GM10248 (cell line): ENCODE measurements at regions of chr1 and their contacts with region 1.

Region 1: DNA sequence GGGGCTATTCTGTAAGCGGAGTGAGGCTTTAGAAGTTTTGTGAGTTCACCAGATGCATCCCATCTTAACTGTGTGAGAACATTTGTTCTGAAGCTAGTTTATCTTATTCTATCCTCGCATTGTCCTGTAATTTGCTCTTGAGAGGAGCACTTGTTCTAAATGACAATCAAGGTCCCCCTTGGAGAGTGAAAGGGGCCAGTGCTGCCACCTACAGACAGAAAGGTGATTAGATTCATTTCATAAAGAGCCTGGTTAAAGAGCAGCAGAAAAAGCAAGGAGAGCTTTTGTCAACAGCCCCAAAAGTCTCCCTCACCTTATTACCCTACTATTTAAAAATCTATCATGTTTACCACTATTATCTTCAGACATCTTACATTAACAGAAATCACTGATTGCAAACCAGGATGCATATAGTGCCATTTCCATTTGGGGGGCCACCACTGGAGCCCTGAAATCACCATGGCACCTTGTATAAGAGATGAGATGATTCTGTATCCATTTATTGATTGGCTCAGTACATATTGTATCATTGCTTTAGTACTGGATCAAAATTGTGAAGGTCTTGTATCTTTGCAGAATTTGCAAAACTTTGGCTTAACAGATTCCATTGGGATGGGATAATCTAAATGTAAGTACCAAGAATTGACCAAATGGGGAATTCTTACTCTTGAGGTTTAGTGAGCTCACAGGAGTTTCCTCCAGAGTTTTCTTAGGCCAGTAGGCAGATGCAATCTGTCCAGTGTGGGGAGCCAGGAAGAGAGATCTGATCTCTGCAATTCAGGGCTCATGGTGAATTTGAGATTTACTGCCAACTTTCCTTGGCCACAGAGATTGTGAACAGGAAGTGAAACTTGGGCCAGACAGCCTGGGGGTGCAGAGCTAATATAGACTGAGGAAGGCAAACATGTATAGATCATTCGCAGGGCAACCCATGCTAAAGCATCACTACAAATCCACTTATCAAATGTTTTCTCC is 64.3 kb upstream of the TRABD2B start:
- DNase-seq: peak; percentile 47
- CTCF ChIP-seq: peak; percentile 46

Region 2: GRCh38 chr1:47934243-47934805 is 127.1 kb before region 1 on chr1:
- CTCF ChIA-PET with region 1: no interaction called
- POLR2A ChIA-PET with region 1: no interaction called
- DNase-seq: no peak
- CTCF ChIP-seq: no peak

Region 3: DNA sequence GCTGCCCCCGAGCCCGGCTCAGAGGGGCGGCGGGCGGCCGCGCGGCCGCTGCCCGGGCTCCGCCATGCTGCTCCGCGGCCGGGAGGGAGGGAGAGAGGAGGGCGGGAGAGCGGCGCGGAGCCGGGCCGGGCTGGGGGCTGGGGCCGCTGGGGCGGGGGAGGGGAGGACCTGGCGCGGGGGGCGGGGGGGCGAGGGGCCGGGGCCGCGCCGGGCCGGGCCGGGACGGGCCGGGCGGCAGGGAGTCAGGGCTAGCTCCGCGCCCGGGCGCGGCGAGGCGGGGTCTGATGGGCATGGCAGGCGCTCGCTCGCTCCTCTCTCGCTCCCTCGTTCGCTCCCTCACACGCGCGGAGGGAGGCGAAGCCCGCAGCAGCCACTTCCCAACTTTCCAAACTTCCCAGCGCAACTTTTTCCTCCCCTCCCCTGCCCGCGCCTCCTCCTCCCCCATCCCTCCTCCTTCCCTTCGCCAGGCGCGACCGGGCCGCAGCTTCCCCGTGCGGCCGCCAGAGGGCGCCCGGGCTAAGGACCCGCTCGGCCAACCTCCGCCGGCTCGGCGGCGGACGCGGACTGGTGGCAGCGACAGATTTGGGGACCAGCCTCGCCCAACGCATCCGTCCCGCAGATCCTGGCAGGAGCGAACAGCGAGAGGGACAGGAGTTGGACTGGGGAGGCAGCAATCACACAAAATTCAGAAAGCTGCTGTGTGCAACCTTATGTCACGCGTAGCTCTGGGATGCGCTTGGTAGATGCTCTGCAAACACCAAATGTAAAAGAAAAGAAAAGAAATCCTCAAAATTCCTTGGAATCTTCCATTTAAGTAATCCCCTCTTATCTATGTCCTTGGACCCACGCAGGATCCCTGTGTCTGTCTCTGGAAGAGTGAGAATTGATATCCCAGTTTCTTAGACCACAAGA is 63.9 kb before region 1 on chr1 and contains the start of gene TRABD2B:
- CTCF ChIA-PET with region 1: interaction called, 22 read pairs
- POLR2A ChIA-PET with region 1: no interaction called
- DNase-seq: peak; percentile 89
- CTCF ChIP-seq: peak; percentile 97

Region 4: GRCh38 chr1:48048064-48048463 is 13.4 kb before region 1 on chr1:
- CTCF ChIA-PET with region 1: interaction called, 25 read pairs
- POLR2A ChIA-PET with region 1: no interaction called
- DNase-seq: no peak
- CTCF ChIP-seq: no peak

Region 5: DNA sequence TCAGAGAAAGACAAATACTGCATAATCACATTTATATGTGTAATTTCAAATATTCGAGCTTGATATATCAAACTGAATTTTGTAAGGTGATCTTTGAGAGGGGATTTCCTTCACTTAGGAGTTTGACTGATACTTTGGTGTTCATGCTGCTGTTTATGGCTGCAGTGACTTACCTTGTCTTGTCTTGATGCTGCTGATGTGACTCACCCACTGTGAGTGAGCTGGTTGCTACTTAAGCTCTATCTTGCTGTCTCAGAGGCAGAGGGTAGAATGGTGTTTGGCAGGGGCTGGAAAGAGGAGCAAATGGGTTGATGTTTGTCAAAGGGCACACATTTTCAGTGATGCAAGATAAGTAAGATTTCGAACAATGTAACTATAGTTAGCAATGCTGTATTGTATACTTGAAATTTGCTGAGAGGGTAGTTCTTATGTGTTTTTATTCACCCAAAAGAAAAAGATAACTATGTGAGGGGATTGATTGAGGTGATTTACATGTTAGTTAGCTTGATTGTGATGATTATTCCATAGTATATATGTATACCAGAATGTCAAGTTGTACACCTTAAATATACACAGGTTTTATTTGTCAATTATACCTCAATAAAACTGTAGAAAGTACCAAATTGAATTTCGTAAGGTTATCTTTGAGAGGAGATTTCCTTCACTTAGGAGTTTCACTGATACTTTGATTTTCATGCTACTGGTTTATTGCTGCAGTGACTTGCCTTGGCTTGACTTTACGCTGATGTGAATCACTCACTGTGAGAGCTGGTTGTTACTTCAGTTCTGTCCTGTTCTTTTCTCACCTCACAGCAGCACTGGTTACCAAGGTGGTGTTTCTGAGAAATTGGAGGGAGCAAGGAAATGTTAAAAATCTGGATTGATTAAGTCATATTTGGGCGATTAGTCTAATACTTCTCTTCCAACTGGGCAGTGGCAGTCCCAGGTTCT is 66.6 kb after region 1 on chr1:
- CTCF ChIA-PET with region 1: no interaction called
- POLR2A ChIA-PET with region 1: no interaction called
- DNase-seq: no peak
- CTCF ChIP-seq: no peak